Gastrocnemius medialis (tissue), 4 donors: ENCODE measurements at regions of chr6 and their contacts with region 1.

Region 1: GRCh38 chr6:126831461-126831860 is 287.0 kb upstream of the RSPO3 start:
- DNase-seq: no peak
- ATAC-seq: no peak
- H3K4me3 ChIP-seq: no peak overlapping the region
- H3K27ac ChIP-seq: no peak overlapping the region
- H3K4me1 ChIP-seq: no peaks in the 10 kb centered on the region
- H3K27me3 ChIP-seq: no peaks in the 10 kb centered on the region
- CTCF ChIP-seq: no peak
- POLR2A ChIP-seq: no peak

Region 2: GRCh38 chr6:126890055-126890454 is 58.6 kb after region 1 on chr6:
- in situ Hi-C with region 1: no loop called
- intact Hi-C with region 1: loop called (anchors 2 kb)
- DNase-seq: no peak
- ATAC-seq: no peak
- H3K4me3 ChIP-seq: no peak overlapping the region
- H3K27ac ChIP-seq: no peak overlapping the region
- H3K4me1 ChIP-seq: no peaks in the 10 kb centered on the region
- H3K27me3 ChIP-seq: no peaks in the 10 kb centered on the region
- CTCF ChIP-seq: no peak
- POLR2A ChIP-seq: no peak